Astrocyte of the cerebellum (primary cell): ENCODE measurements at regions of chr10 and their contacts with region 1.

Region 1: DNA sequence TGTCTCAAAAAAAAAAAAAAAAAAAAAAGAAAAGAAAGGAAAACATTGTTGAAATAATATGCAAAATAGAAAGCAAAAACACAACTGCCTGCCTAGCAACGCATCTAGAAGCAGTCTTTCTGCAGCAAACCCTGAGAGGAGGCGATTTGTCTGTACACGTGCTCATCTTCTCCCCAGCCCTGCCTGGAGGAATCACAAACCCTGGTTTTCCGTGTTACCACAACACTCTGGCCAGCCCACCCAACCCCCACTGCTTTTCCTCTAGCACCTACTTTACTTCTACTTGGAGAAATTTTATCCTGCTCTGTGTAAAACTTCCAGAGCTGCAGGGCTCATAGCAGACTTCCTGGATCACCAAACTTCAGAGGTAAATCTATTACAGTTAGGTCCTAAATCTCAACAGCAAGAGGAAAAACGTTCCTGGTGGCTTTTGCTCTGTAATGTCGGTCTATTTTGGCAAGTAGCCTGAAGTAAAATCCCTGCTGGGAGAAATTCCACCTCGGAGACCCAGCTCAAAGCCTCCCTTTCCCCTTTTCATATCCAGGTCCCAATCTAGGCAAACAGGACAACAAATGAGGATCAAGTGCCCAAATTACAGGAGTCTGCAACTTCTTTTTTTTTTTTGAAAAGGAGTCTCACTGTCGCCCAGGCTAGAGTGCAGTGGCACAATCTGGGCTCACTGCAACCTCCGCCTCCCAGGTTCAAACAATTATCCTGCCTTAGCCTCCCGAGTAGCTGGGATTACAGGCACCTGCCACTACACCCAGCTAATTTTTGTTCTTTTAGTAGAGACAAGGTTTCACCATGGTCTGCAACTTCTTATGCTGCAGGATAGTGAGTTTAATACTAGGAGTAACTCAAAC is 91.6 kb downstream of the DNMBP start:
- DNase-seq: peak; percentile 50
- H3K4me3 ChIP-seq: peak overlapping the region; percentile 40
- CTCF ChIP-seq: no peak

Region 2: GRCh38 chr10:99854860-99855259 is 63.3 kb before region 1 on chr10:
- in situ Hi-C with region 1: loop called (anchors 10 kb)
- DNase-seq: peak; percentile 53
- H3K4me3 ChIP-seq: no peak overlapping the region
- CTCF ChIP-seq: peak; percentile 65